B cell (primary cell): ENCODE measurements at regions of chr11 and their contacts with region 1.

Region 1: DNA sequence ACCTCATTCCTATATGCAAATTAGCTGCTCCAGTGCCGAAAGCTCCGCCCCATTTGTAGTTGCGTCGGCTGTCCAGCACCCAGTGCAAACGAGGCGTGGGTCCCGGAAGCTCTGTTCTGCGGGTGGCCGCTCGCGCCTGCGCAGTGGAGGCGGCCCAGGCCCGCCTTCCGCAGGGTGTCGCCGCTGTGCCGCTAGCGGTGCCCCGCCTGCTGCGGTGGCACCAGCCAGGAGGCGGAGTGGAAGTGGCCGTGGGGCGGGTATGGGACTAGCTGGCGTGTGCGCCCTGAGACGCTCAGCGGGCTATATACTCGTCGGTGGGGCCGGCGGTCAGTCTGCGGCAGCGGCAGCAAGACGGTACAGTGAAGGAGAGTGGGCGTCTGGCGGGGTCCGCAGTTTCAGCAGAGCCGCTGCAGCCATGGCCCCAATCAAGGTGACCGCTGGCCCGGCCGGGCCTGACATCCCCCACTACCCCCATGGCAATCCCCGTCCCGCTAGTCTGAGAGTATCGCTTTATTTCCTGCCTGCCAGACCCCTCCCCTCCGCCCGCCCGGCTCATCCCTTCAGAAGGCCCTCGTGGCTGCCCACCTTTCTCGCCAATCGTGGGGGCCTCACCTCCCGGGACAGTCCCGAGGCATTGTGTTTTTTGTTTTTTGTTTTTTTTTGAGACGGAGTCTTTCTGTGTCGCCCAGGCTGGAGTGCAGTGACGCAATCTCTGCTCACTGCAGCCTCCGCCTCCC is at the start of gene PRDX5:
- DNase-seq: peak; percentile 98
- ATAC-seq: peak; percentile 79
- H3K4me3 ChIP-seq: peak within 1 kb of the TSS; percentile 76 to 95 (median 81)
- H3K4me3 Mint-ChIP-seq: peak within 1 kb of the TSS; percentile 98
- H3K27ac ChIP-seq: peak within 1 kb of the TSS; percentile 99 to 100
- H3K27ac Mint-ChIP-seq: peak within 1 kb of the TSS; percentile 100
- H3K4me1 ChIP-seq: peaks cover 8 to 26% of the 10 kb centered on the region in 2 donors
- H3K4me1 Mint-ChIP-seq: peaks cover 32% of the 10 kb centered on the region
- H3K27me3 ChIP-seq: no peaks in the 10 kb centered on the region
- H3K27me3 Mint-ChIP-seq: no peaks in the 10 kb centered on the region
- CTCF ChIP-seq: peak; percentile 39
- total RNA-seq, gene PRDX5: 50.4 and 56.3 TPM in 2 replicates

Region 2: DNA sequence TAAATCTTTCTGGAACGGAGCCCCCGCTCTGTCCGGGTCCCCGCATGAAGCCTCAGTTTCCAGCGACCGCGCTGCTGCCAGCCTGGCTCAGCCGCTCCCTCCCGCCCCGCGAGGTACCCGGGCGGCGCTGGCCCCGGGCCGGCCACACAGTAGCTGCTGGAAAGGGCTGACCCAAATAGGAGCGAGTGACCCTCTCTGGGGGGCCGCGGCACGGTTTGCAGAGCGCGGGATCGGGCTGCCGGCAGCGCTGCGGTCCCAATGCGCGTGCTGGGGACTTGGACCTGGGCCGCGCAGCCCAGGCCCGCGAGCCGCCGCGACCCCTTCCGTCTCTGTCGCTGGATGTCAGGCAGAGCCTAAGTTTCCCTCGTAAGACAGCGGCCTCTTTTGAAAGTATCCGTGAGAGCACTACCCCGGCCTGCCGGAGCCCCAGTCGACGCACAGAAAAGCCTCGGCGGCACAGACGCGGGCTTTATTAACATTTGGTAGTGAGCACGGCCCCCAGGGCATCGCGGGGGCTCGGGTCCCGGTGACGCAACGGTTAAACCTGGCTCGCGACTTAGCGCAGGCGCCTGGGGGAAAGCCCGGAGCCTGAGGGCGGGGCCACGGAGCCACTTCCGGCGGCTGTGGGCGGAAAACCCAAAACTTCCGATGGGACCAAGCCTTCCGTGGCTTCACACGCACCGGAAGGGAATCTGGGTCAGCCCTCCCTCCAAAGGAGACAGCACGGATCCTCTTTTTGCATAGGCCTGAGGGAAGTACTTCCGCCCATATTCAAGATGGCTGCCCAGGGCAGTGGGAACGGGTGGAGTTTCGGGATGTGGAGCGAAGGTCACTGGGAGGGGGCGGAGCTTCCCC is 48.5 kb before region 1 on chr11:
- CTCF ChIA-PET with region 1: interaction called, 9 read pairs
- POLR2A ChIA-PET with region 1: interaction called, 19 read pairs
- intact Hi-C with region 1: loop called (anchors 1 kb)
- DNase-seq: peak; percentile 99
- ATAC-seq: peak; percentile 73
- H3K4me3 ChIP-seq: peak overlapping the region; percentile 79 to 96 (median 87)
- H3K4me3 Mint-ChIP-seq: peak overlapping the region; percentile 100
- H3K27ac ChIP-seq: peak overlapping the region; percentile 89 to 91
- H3K27ac Mint-ChIP-seq: peak overlapping the region; percentile 99
- H3K4me1 ChIP-seq: peaks cover 14 to 29% of the 10 kb centered on the region in 2 donors
- H3K4me1 Mint-ChIP-seq: peaks cover 19% of the 10 kb centered on the region
- H3K27me3 ChIP-seq: no peaks in the 10 kb centered on the region
- H3K27me3 Mint-ChIP-seq: no peaks in the 10 kb centered on the region
- CTCF ChIP-seq: peak; percentile 37

Region 3: DNA sequence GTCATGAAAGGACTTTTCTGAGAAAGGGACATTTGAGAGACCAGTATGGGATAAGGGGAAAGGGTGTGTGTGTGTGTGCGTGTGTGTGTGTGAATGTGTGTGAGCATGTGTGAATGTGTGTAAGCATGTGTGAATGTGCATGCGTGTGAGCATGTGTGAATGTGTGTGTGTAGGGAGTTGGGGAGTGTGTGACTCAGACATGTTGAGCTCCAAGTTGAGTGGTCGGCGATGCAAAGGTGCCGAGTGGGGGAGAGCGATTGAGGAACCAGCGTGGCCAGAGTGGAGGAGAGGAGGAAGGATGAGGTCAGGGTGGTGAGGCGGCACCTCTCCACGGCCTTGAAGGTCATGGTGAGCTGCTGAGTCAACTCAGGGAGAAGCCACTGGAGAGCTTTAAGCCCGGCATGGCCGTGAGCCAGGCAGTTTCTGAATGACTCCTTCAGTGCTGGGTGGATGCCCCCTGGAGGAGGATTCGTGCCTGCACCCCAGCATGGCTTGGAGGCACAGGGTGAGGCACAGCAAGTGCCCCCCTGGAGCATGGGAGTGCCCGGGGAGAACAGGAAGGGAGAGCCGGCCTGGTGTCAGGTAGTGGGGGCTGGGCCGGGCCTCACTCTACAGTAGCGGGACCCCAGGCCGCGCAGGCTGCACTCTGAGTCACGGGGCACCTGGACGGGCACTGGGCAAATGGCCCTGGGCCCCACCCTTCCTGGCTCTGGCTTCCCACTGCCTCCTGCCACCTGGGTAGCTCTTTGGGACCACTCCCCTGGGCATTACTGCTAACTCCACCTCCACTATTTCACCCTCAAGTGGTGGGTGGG is 13.6 kb after region 1 on chr11:
- CTCF ChIA-PET with region 1: interaction called, 47 read pairs
- POLR2A ChIA-PET with region 1: interaction called, 24 read pairs
- intact Hi-C with region 1: loop called (anchors 1 kb)
- DNase-seq: peak; percentile 69
- ATAC-seq: peak; percentile 23
- H3K4me3 ChIP-seq: no peak overlapping the region
- H3K4me3 Mint-ChIP-seq: peak overlapping the region; percentile 27
- H3K27ac ChIP-seq: no peak overlapping the region
- H3K27ac Mint-ChIP-seq: peak overlapping the region; percentile 57
- H3K4me1 ChIP-seq: peaks cover 20 to 32% of the 10 kb centered on the region in 2 donors
- H3K4me1 Mint-ChIP-seq: peaks cover 34% of the 10 kb centered on the region
- H3K27me3 ChIP-seq: no peaks in the 10 kb centered on the region
- H3K27me3 Mint-ChIP-seq: no peaks in the 10 kb centered on the region
- CTCF ChIP-seq: peak; percentile 66

Region 4: GRCh38 chr11:64358907-64359711 is 41.0 kb after region 1 on chr11 and contains the start of gene RPS6KA4:
- CTCF ChIA-PET with region 1: interaction called, 188 read pairs
- POLR2A ChIA-PET with region 1: interaction called, 16 read pairs
- intact Hi-C with region 1: loop called (anchors 1 kb)
- DNase-seq: peak; percentile 68
- ATAC-seq: peak; percentile 72
- H3K4me3 ChIP-seq: peak within 1 kb of the TSS; percentile 26 to 86 (median 75)
- H3K4me3 Mint-ChIP-seq: peak within 1 kb of the TSS; percentile 94
- H3K27ac ChIP-seq: peak within 1 kb of the TSS; percentile 12 to 46
- H3K27ac Mint-ChIP-seq: peak within 1 kb of the TSS; percentile 81
- H3K4me1 ChIP-seq: peaks cover 27 to 51% of the 10 kb centered on the region in 2 donors
- H3K4me1 Mint-ChIP-seq: peaks cover 43% of the 10 kb centered on the region
- H3K27me3 ChIP-seq: no peaks in the 10 kb centered on the region
- H3K27me3 Mint-ChIP-seq: no peaks in the 10 kb centered on the region
- CTCF ChIP-seq: no peak
- total RNA-seq, gene RPS6KA4: 22.6 and 24.2 TPM in 2 replicates

Region 5: DNA sequence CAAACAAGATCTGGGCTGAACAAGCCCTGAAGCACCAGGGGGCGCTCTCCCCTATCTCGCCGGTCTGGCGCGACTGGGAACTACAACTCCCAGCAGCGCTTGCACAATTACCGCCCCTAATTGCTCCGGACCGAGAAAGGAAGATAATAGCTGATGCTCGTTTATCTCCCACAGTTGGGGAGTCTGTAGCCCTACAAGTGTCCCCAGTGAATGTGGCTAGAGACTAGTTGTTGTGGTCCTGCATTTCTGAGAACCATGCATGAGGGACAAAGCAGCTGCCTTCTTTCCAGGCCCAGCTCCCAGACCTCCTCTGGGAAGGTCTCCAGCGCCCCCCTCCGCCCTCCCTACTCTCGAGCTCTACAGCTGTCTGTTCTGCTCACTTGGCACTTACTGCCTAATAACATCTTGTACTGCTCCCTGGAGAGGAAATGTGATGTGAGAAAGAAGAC is 370.4 kb after region 1 on chr11:
- CTCF ChIA-PET with region 1: interaction called, 5 read pairs
- POLR2A ChIA-PET with region 1: interaction called, 3 read pairs
- intact Hi-C with region 1: loop called (anchors 1 kb)
- DNase-seq: peak; percentile 94
- ATAC-seq: peak; percentile 95
- H3K4me3 ChIP-seq: peak overlapping the region; percentile 37 to 74 (median 63)
- H3K4me3 Mint-ChIP-seq: peak overlapping the region; percentile 88
- H3K27ac ChIP-seq: peak overlapping the region in 1 of 2 donors; percentile 5
- H3K27ac Mint-ChIP-seq: peak overlapping the region; percentile 88
- H3K4me1 ChIP-seq: peaks cover 14 to 23% of the 10 kb centered on the region in 2 donors
- H3K4me1 Mint-ChIP-seq: peaks cover 20% of the 10 kb centered on the region
- H3K27me3 ChIP-seq: peaks cover 0 to 18% (median 8%) of the 10 kb centered on the region in 4 experiments
- H3K27me3 Mint-ChIP-seq: peaks cover 15% of the 10 kb centered on the region
- CTCF ChIP-seq: peak; percentile 92

Region 6: DNA sequence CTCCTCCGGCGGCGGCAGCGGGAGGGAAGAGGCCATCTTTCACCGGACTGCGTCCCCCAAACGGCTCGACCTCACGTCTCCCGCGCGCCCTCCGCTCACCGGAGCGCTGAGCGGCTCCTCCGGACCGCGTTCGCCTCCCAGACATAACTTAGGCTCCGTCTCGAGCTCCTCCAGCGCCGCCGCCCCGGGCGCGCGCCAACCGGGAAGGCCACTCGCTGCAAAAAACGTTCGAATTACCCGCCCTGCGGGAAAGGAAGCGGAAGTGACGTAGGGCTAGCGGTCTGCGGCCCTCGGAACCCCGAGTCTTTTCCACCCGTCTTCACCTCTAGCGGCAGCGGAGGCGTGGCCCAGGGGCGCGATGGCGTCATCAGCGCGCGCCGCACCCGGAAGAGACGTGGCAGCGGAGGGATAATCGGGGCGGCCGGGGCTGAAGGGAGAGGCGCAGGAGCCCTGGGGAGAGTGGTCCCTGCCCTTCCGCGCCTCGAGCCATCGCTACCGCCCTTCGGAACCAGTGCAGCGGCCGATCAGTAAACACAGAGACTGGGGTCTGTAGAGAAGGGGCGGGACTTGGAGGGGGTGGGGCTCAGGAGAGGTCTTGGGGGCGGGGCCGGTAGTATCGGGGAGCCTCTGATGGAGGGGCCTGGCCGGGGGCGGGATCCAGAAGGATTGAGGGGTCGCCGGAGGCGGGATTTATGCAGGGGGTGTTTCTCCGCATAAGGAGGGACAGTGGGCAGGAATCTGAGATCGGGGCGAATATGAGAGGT is 765.9 kb after region 1 on chr11 and contains the starts of genes CDCA5 and ZFPL1:
- CTCF ChIA-PET with region 1: no interaction called
- POLR2A ChIA-PET with region 1: no interaction called
- intact Hi-C with region 1: no loop called
- DNase-seq: peak; percentile 98
- ATAC-seq: peak; percentile 87
- H3K4me3 ChIP-seq: peak within 1 kb of the TSS; percentile 61 to 81 (median 76)
- H3K4me3 Mint-ChIP-seq: peak within 1 kb of the TSS; percentile 98
- H3K27ac ChIP-seq: peak within 1 kb of the TSS; percentile 91 to 94
- H3K27ac Mint-ChIP-seq: peak within 1 kb of the TSS; percentile 100
- H3K4me1 ChIP-seq: peaks cover 12 to 19% of the 10 kb centered on the region in 2 donors
- H3K4me1 Mint-ChIP-seq: peaks cover 28% of the 10 kb centered on the region
- H3K27me3 ChIP-seq: no peaks in the 10 kb centered on the region
- H3K27me3 Mint-ChIP-seq: no peaks in the 10 kb centered on the region
- CTCF ChIP-seq: no peak
- total RNA-seq, gene CDCA5: 0.78 and 1.4 TPM in 2 replicates
- total RNA-seq, gene ZFPL1: 47.9 and 57.3 TPM in 2 replicates